ENCODE measurements at regions of chr12 and their contacts with region 1.

Region 1: DNA sequence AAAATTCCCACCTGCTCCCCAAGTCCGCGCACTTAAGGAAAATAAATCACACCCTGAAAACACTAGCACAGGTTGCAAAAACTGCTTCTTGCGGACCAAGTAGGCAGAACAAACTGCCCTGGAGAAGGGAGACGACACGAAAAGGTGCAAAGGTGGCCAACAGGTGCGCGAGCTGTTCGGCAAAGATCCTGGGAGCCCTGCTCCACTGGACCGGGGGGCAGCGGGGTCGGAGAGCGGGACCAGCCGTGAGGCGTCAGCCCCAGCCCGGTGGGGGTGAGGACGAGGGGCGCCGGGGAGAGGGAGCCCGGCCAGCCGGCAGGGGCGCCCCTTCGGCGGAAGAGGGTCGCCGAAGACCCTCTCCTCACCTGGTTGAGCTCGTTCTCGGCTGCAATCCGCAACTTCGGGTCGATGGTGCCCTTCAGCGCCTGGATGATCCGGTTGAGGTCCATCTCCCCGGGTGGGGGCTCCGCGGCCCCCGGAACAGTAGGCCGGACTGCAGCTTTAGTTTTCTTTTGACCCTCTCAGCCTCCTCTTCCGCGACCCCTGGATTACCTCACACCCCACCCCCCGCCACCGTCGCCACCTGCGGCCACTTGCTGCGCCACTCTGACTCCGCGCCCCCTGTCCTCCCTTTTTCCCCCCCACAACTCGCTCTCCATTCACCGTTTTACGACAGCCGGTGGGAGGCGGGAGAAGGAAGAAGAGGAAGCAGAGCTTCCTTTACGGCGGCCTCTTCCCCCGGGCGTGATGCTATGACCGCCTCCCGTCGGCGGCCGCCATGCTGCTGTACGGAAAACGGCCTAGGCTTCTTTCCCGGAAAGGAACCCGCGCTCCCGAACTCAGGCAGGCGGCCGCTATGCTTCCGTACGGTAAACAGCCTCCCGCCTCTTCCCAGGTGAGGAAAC is at the start of gene IPO8:
- DNase-seq: peak; percentile 69 to 93 (median 82)
- ATAC-seq: peak; percentile 94
- H3K4me3 ChIP-seq: peak within 1 kb of the TSS; percentile 90
- H3K4me3 Mint-ChIP-seq: peak within 1 kb of the TSS; percentile 100
- H3K27ac ChIP-seq: peak within 1 kb of the TSS; percentile 61 to 64
- H3K27ac Mint-ChIP-seq: peak within 1 kb of the TSS; percentile 90
- H3K4me1 ChIP-seq: peaks cover 30% of the 10 kb centered on the region
- H3K4me1 Mint-ChIP-seq: peaks cover 54% of the 10 kb centered on the region
- H3K27me3 ChIP-seq: no peaks in the 10 kb centered on the region
- H3K27me3 Mint-ChIP-seq: no peaks in the 10 kb centered on the region
- CTCF ChIP-seq: peak; percentile 56
- total RNA-seq, gene IPO8: 17.2 to 17.5 TPM

Region 2: DNA sequence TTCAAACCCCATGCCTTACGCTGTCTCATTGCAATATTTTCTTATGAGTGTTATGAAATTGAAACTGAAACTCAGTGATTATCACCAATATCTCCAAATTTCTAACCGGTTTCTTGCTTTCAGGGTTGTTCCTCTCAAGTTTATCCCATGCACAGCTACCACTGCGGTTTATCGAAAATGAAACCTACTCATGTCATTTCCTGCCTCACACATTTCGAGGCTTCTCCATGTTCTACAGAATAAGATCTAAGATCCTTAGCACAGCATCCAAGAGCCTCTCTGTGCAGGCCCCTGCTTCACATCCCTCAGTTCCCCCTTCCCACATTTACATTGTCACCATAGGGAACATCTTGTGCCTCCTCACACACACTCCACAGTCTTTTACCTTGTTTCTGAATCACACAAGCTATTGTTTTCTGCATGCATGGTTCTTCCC is 1591.9 kb before region 1 on chr12:
- CTCF ChIA-PET with region 1: no interaction called
- POLR2A ChIA-PET with region 1: no interaction called
- intact Hi-C with region 1: loop called in 1 of 2 experiments (anchors 10 kb)
- DNase-seq: peak in 12 of 14 experiments; percentile 5 to 90 (median 32)
- ATAC-seq: peak; percentile 93
- H3K4me3 ChIP-seq: peak overlapping the region; percentile 41
- H3K4me3 Mint-ChIP-seq: peak overlapping the region; percentile 63
- H3K27ac ChIP-seq: peak overlapping the region; percentile 66 to 83
- H3K27ac Mint-ChIP-seq: peak overlapping the region; percentile 95
- H3K4me1 ChIP-seq: peaks cover 13% of the 10 kb centered on the region
- H3K4me1 Mint-ChIP-seq: peaks cover 37% of the 10 kb centered on the region
- H3K27me3 ChIP-seq: no peaks in the 10 kb centered on the region
- H3K27me3 Mint-ChIP-seq: no peaks in the 10 kb centered on the region
- CTCF ChIP-seq: no peak

Region 3: DNA sequence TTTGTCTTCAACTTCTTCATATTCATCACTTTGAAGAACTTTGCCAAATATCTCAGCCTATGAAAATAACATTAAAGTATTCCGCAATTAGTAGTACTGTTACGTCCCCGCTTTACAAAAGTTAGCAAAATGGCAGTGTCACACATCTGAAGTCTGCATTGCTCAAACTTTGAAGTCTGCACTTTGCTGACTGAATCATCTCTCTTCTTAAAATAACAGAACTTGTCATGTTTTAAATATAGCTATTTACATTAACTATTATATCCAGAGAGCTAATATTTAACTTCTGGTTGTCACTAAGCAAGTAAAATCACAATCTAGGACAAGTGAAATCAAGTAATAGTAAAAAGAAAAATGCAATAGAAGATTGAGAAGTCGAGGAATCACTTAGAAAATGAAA is 34.2 kb before region 1 on chr12:
- CTCF ChIA-PET with region 1: no interaction called
- POLR2A ChIA-PET with region 1: no interaction called
- intact Hi-C with region 1: no loop called
- DNase-seq: no peak
- ATAC-seq: no peak
- H3K4me3 ChIP-seq: no peak overlapping the region
- H3K4me3 Mint-ChIP-seq: no peak overlapping the region
- H3K27ac ChIP-seq: no peak overlapping the region
- H3K27ac Mint-ChIP-seq: no peak overlapping the region
- H3K4me1 ChIP-seq: no peaks in the 10 kb centered on the region
- H3K4me1 Mint-ChIP-seq: no peaks in the 10 kb centered on the region
- H3K27me3 ChIP-seq: no peaks in the 10 kb centered on the region
- H3K27me3 Mint-ChIP-seq: no peaks in the 10 kb centered on the region
- CTCF ChIP-seq: no peak

Region 4: GRCh38 chr12:30754709-30755394 is 59.4 kb after region 1 on chr12 and contains the start of gene CAPRIN2:
- CTCF ChIA-PET with region 1: interaction called, 7 read pairs
- POLR2A ChIA-PET with region 1: interaction called, 47 read pairs
- intact Hi-C with region 1: loop called (anchors 1 to 5 kb)
- DNase-seq: peak; percentile 86 to 97 (median 94)
- ATAC-seq: peak; percentile 90
- H3K4me3 ChIP-seq: peak within 1 kb of the TSS; percentile 81
- H3K4me3 Mint-ChIP-seq: peak within 1 kb of the TSS; percentile 94
- H3K27ac ChIP-seq: peak within 1 kb of the TSS; percentile 51 to 76
- H3K27ac Mint-ChIP-seq: peak within 1 kb of the TSS; percentile 77
- H3K4me1 ChIP-seq: peaks cover 16% of the 10 kb centered on the region
- H3K4me1 Mint-ChIP-seq: peaks cover 45% of the 10 kb centered on the region
- H3K27me3 ChIP-seq: no peaks in the 10 kb centered on the region
- H3K27me3 Mint-ChIP-seq: no peaks in the 10 kb centered on the region
- CTCF ChIP-seq: peak; percentile 18
- total RNA-seq, gene CAPRIN2: 21.2 to 24.6 TPM

Region 5: GRCh38 chr12:31325877-31326631 is 630.6 kb after region 1 on chr12 and contains the start of gene SINHCAF:
- CTCF ChIA-PET with region 1: no interaction called
- POLR2A ChIA-PET with region 1: interaction called, 6 read pairs
- intact Hi-C with region 1: loop called in 1 of 2 experiments (anchors 5 kb)
- DNase-seq: peak; percentile 96 to 100 (median 99)
- ATAC-seq: peak; percentile 52
- H3K4me3 ChIP-seq: peak within 1 kb of the TSS; percentile 99
- H3K4me3 Mint-ChIP-seq: peak within 1 kb of the TSS; percentile 92
- H3K27ac ChIP-seq: peak within 1 kb of the TSS; percentile 77 to 95
- H3K27ac Mint-ChIP-seq: peak within 1 kb of the TSS; percentile 85
- H3K4me1 ChIP-seq: peaks cover 27% of the 10 kb centered on the region
- H3K4me1 Mint-ChIP-seq: peaks cover 32% of the 10 kb centered on the region
- H3K27me3 ChIP-seq: no peaks in the 10 kb centered on the region
- H3K27me3 Mint-ChIP-seq: no peaks in the 10 kb centered on the region
- CTCF ChIP-seq: no peak
- total RNA-seq, gene SINHCAF: 103 to 119 TPM

Measured in CD4-positive, alpha-beta T cell (primary cell).